Activated CD8-positive, alpha-beta T cell treated with anti-CD3 and anti-CD28 coated beads, Interleukin-2, amount 10 ng/mL, durations not matched to agents 7 days and 5 days (primary cell): ENCODE measurements at regions of chr9 and their contacts with region 1.

Region 1: GRCh38 chr9:133149126-133150107 is 14.3 kb downstream of the GBGT1 start:
- DNase-seq: peak; percentile 84
- ATAC-seq: peak; percentile 66
- H3K4me3 Mint-ChIP-seq: peak overlapping the region; percentile 72
- H3K27ac Mint-ChIP-seq: peak overlapping the region; percentile 81
- H3K4me1 Mint-ChIP-seq: peaks cover 47% of the 10 kb centered on the region
- H3K27me3 Mint-ChIP-seq: no peaks in the 10 kb centered on the region

Region 2: DNA sequence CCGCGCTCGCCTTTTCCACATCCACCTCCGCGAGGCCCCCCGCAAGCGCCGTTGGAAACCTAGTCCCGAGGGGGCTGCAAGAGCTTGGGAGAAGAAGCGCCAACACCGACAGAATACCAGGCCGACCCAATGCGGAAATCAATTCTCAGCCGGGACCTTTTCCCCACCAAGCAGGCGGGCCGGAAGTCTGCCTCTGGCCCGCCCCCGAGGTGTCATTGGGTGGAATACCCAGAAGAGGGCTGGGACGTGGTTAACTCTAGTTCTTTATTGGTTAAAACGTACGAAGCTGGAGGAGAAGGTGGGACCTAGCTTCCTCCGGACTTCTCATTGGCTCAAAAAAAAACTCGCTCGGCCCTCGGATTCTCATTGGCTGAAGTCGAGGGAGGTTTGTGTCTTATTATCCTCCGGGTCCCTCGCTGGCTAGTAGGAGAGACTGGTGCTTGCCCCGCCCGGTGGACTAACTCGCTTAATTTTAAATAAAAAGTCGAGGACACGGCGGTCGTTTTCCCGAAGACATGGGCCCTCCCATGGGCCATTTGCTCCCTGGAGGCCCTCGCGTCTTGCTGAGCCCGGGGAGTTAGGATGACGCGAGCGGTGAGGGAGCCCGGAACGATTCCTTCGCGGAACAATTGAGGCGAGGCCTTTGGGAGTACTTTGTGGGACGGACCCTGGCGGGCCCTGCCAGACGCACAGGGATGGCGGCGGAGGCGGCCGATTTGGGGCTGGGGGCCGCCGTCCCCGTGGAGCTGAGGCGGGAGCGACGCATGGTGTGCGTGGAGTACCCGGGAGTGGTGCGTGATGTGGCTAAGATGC is 118.9 kb before region 1 on chr9 and contains the start of gene GTF3C5:
- CTCF ChIA-PET with region 1: interaction called, 97 read pairs
- POLR2A ChIA-PET with region 1: interaction called, 18 read pairs
- DNase-seq: peak; percentile 96
- ATAC-seq: peak; percentile 98
- H3K4me3 Mint-ChIP-seq: peak within 1 kb of the TSS; percentile 93
- H3K27ac Mint-ChIP-seq: peak within 1 kb of the TSS; percentile 93
- H3K4me1 Mint-ChIP-seq: peaks cover 34% of the 10 kb centered on the region
- H3K27me3 Mint-ChIP-seq: no peaks in the 10 kb centered on the region
- total RNA-seq, gene GTF3C5: 89.3 to 95.7 TPM

Region 3: GRCh38 chr9:133094842-133095393 is 54.5 kb before region 1 on chr9:
- CTCF ChIA-PET with region 1: interaction called, 421 read pairs
- POLR2A ChIA-PET with region 1: interaction called, 5 read pairs
- DNase-seq: no peak
- ATAC-seq: no peak
- H3K4me3 Mint-ChIP-seq: no peak overlapping the region
- H3K27ac Mint-ChIP-seq: no peak overlapping the region
- H3K4me1 Mint-ChIP-seq: peaks cover 2% of the 10 kb centered on the region
- H3K27me3 Mint-ChIP-seq: no peaks in the 10 kb centered on the region

Region 4: DNA sequence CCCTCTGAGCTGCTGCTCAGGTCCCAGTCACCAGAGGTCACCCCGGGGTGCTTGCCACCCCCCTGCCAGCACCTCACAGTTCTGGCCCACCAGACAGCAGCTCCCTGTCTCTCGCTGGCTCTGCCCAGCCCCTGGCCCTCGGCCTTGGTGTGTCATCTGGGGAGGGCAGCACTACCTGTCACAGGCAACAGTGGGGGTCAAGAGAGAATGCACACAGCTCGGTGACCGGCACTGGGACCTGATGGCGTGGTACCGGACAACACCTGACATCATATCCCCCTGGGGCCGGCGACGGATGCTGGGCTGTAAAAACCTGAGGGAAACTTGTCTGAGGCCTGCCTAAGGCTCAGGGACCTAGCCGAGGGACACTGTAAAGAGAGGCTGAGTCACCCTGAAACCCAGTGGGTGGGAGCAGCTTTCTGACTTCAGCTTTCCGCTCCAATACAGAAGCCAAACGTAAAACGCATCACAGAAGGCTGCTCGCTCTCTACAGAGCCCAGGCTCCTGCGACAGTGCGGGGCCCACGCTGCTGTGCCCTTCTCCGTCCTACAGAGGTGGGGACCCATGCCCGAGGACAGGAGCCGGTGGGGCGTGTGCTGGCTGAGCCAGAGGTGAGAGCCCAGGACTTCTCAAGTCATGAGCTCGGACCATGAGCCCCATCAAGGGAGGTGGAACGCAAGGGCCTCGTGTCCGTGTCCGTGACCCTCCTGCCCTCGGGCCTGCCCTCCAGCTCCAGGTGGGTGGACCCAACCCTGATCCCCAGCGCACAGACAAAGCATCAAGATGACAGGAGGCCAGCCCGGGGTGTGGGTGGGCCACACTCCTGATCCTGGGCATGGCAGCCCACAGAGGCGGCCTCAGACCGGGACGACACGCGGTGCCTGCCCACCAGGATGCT is 33.7 kb before region 1 on chr9:
- CTCF ChIA-PET with region 1: interaction called, 421 read pairs
- POLR2A ChIA-PET with region 1: interaction called, 14 read pairs
- DNase-seq: peak; percentile 66
- ATAC-seq: peak; percentile 62
- H3K4me3 Mint-ChIP-seq: no peak overlapping the region
- H3K27ac Mint-ChIP-seq: peak overlapping the region; percentile 83
- H3K4me1 Mint-ChIP-seq: peaks cover 79% of the 10 kb centered on the region
- H3K27me3 Mint-ChIP-seq: no peaks in the 10 kb centered on the region

Region 5: DNA sequence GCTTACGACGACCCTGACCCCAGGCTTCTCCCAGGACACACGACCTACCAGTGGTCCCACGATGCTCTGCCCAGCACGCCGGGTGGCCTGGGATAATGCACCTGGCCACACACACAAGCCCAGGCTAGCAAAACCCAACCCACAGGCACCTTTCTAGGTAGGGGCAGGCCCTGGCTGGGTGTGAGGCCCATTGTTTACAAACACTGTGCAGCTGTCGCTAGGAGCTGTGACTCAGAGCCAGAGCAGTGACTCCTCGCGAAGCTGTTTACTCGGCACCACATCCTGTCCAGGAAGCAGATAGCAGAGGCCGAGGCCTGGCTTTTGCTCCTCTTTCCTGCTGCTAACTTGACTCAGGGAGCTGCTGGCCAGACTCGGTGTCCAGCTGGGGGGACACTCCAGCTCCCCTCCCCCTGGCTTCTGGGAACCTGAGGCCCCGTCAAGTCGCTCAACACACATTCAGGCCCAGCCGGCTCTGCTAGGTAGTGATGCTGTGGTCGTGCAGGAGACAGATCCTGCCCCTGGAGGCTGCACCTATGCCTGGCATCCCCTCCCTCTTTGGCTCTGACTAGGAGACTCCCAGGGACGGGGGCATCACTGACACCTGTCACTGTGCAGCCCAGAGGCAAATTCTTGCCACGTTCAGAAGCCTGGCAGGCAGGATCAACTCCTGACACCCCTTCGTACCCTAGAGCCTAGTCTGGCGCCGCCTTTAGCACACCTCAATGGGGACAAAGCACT is 15.6 kb before region 1 on chr9:
- CTCF ChIA-PET with region 1: interaction called, 288 read pairs
- POLR2A ChIA-PET with region 1: interaction called, 64 read pairs
- DNase-seq: peak; percentile 95
- ATAC-seq: peak; percentile 81
- H3K4me3 Mint-ChIP-seq: peak overlapping the region; percentile 40
- H3K27ac Mint-ChIP-seq: peak overlapping the region; percentile 99
- H3K4me1 Mint-ChIP-seq: peaks cover 90% of the 10 kb centered on the region
- H3K27me3 Mint-ChIP-seq: no peaks in the 10 kb centered on the region

Region 6: DNA sequence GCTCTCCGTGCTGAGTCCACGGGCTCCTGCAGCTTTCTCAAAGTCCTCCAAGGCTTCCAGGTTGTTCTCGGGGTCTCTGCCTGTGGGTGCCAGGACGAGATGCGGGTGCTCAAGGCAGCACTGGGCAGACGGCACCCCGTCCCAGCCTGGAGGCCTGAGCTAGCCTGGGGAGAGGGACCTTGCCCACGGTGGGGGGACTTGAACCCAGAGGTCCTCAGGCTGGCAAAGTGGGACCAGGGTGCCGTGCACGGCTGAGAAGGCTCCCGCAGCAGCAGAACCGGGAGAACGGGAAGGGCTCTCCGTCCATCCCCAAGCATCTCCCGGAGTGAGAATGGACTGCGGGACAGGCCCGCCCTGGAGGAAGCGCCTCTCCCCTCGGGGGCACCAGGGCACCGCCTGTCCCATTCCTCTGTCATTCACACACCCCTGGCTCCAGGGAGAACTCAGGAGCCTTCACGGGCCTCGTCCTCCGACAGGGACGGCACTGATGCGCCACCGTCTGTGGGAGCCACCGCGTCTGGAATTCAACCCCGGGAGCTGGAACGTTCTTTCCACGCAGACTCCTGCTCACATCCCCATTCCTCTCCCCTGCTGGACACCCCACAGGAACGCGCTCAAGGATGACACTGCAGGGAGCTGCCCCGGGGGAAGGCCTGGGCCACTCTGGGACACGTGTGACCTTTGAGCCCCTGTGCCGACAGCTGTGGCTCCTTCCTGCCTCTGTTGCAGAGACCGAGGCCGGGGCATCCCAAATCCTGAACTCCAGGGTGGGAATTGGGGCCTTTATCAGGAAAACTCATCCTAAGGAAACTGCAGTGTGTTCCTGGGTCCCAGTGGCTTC is 76.0 kb after region 1 on chr9:
- CTCF ChIA-PET with region 1: no interaction called
- POLR2A ChIA-PET with region 1: no interaction called
- DNase-seq: no peak
- ATAC-seq: no peak
- H3K4me3 Mint-ChIP-seq: no peak overlapping the region
- H3K27ac Mint-ChIP-seq: no peak overlapping the region
- H3K4me1 Mint-ChIP-seq: no peaks in the 10 kb centered on the region
- H3K27me3 Mint-ChIP-seq: no peaks in the 10 kb centered on the region

Region 7: DNA sequence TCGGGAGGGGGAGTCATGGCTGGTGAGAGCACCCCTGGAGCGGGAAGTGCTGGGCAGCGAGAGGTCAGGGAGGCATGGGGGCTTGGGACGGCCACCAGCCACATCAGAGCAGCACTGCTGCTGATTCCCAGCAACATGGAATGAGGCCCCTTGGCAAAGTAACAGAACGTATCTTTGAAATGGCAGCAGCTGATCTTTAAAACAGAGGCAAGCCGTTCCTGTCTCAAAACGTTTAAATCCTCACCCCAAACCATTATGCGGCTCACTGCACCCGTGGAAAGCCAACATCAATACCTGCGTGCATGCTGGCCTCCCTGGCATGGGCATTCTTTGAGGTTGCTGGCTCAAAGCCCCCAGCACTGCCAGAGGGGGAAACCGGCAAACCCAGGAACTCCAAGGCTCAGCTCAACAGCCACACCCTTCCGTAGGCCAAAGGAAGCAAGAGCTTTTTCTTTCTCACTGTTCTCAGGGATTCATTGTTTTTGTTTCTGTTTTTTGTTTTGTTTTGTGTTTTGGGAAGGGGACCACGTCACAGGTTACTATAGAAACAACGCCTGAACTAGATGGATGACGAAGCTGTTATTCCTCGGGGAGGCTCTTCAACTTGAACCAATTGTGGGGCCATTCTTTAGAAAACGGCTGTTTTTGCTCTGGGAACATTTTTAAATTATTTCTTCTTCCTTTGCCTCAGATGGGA is 87.8 kb after region 1 on chr9:
- CTCF ChIA-PET with region 1: no interaction called
- POLR2A ChIA-PET with region 1: no interaction called
- DNase-seq: no peak
- ATAC-seq: no peak
- H3K4me3 Mint-ChIP-seq: no peak overlapping the region
- H3K27ac Mint-ChIP-seq: no peak overlapping the region
- H3K4me1 Mint-ChIP-seq: peaks cover 7% of the 10 kb centered on the region
- H3K27me3 Mint-ChIP-seq: peaks cover 8% of the 10 kb centered on the region